ENCODE measurements at regions of chr9 and their contacts with region 1.

Region 1: DNA sequence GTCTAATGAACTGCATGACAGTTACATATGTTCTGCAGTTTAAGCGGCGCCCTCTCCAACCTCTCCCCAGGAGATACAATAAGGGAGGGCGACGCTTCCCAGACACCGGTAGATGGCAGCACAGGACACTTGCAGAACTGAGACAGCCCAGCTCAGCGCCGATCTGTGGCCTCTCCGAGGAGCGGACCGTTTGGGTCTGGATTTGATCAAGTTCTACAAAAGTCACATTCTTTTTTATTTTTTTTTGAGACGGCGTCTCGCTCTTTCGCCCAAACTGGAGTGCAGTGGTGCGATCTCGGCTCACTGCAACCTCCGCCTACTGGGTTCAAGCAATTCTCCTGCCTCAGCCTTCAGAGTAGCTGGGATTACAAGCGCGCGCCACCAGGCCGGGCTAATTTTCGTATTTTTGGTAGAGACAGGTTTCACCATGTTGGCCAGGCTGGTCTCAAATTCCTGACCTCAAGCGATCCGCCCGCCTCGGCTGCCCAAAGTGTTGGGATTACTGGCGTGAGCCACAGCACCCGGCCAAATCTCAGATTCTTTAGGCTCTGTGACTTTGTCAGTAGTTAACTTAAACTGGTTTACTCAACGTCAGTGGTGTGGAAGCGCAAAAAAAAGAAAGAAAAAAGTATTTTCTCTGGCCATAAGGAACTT is 1.4 kb upstream of the ATOSB start:
- DNase-seq: peak; percentile 82 to 95
- H3K4me3 ChIP-seq: peak overlapping the region; percentile 46
- H3K4me1 ChIP-seq: peaks cover 17% of the 10 kb centered on the region
- H3K27me3 ChIP-seq: no peaks in the 10 kb centered on the region

Region 2: DNA sequence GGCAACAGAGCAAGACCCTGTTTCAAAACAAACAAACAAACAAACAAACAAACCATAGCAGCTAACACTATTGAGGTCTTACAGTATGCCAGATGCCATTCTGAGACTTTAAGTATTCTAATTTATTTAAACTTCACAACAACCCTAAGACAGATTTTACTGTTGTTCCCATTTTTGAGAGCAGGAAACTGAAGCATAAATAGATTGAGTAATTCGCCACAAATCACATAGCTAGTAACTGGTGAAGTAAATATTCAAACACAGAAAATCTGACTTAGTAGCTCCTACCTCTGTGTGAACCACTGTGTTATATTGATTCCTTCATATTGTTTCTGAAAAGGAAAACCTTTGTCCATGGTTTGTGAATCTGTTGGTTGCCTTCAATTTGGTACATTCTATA is 143.2 kb after region 1 on chr9:
- in situ Hi-C with region 1: loop called (anchors 5 kb)
- DNase-seq: no peak
- H3K4me3 ChIP-seq: no peak overlapping the region
- H3K4me1 ChIP-seq: no peaks in the 10 kb centered on the region
- H3K27me3 ChIP-seq: no peaks in the 10 kb centered on the region

Region 3: GRCh38 chr9:35476596-35476995 is 359.6 kb after region 1 on chr9:
- in situ Hi-C with region 1: loop called (anchors 5 kb)
- DNase-seq: no peak
- H3K4me3 ChIP-seq: no peak overlapping the region
- H3K4me1 ChIP-seq: no peaks in the 10 kb centered on the region
- H3K27me3 ChIP-seq: peaks cover 19% of the 10 kb centered on the region; the same call in 1 of the 2 replicates

Region 4: GRCh38 chr9:35553670-35554543 is 436.9 kb after region 1 on chr9:
- in situ Hi-C with region 1: loop called (anchors 25 kb)
- DNase-seq: peak; percentile 61 to 74
- H3K4me3 ChIP-seq: no peak overlapping the region
- H3K4me1 ChIP-seq: no peaks in the 10 kb centered on the region; the same call in 1 of the 2 replicates
- H3K27me3 ChIP-seq: no peaks in the 10 kb centered on the region

Measured in HAP-1 (cell line).